CD4-positive, alpha-beta T cell (primary cell): ENCODE measurements at regions of chr1 and their contacts with region 1.

Region 1: GRCh38 chr1:28518000-28518744 is 12.3 kb downstream of the RCC1 start:
- DNase-seq: peak; percentile 80 to 93 (median 86)
- ATAC-seq: peak; percentile 90
- H3K4me3 ChIP-seq: peak overlapping the region; percentile 66
- H3K4me3 Mint-ChIP-seq: peak overlapping the region; percentile 91
- H3K27ac ChIP-seq: peak overlapping the region; percentile 23 to 29
- H3K27ac Mint-ChIP-seq: peak overlapping the region; percentile 83
- H3K4me1 ChIP-seq: peaks cover 24% of the 10 kb centered on the region
- H3K4me1 Mint-ChIP-seq: peaks cover 33% of the 10 kb centered on the region
- H3K27me3 ChIP-seq: no peaks in the 10 kb centered on the region
- H3K27me3 Mint-ChIP-seq: no peaks in the 10 kb centered on the region
- CTCF ChIP-seq: peak; percentile 94

Region 2: GRCh38 chr1:28540651-28541050 is 22.5 kb after region 1 on chr1:
- CTCF ChIA-PET with region 1: no interaction called
- POLR2A ChIA-PET with region 1: no interaction called
- intact Hi-C with region 1: no loop called
- DNase-seq: no peak
- ATAC-seq: no peak
- H3K4me3 ChIP-seq: no peak overlapping the region
- H3K4me3 Mint-ChIP-seq: no peak overlapping the region
- H3K27ac ChIP-seq: no peak overlapping the region
- H3K27ac Mint-ChIP-seq: no peak overlapping the region
- H3K4me1 ChIP-seq: no peaks in the 10 kb centered on the region
- H3K4me1 Mint-ChIP-seq: no peaks in the 10 kb centered on the region
- H3K27me3 ChIP-seq: no peaks in the 10 kb centered on the region
- H3K27me3 Mint-ChIP-seq: no peaks in the 10 kb centered on the region
- CTCF ChIP-seq: no peak

Region 3: DNA sequence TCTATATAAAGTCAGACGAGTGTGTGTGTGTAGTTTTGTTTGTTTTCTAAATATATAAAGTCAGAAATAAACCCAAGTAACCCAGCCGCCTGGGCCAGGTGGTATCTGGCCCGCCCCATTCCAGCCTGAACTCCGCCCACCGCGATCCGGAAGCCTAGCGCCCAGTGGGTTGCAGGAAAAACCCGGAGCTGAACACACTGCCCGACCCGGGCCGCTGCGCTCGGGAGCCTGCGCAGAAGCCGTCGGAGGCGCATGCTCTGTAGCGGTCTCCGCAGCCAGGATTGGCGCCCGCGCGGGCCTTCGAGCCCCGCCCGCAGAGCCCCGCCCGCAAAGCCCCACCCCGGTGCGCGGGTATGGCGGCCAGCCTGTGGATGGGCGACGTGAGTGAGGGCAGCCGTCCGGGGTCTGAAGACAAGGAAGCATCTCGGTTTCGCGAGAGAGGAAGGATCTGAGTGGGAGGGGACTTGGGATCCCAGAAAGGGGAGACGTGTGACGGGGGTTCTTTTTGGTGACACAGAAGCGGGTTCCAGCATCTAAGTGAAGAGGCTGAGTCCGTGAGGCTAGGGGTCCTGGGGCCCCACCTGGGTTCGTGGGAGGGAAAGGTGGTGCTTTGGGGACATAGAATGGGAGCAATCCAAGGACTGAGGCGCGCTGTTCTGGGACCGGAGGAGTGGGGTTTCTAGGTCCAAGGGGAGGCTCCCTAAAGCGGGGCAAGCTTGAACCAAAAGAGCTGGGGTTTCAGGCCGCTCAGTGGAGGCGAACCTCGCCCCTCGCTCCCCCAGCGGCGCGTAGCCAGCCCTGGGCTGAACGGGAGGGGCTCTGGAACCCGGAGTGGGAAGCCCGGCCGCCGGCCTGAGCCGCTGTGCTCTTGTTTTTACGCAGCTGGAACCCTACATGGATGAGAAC is 34.8 kb after region 1 on chr1 and contains the start of gene TRNAU1AP:
- CTCF ChIA-PET with region 1: interaction called, 7 read pairs
- POLR2A ChIA-PET with region 1: interaction called, 9 read pairs
- intact Hi-C with region 1: loop called (anchors 1 to 2 kb)
- DNase-seq: peak; percentile 94 to 99 (median 96)
- ATAC-seq: peak; percentile 95
- H3K4me3 ChIP-seq: peak within 1 kb of the TSS; percentile 84
- H3K4me3 Mint-ChIP-seq: peak within 1 kb of the TSS; percentile 99
- H3K27ac ChIP-seq: peak within 1 kb of the TSS; percentile 66 to 68
- H3K27ac Mint-ChIP-seq: peak within 1 kb of the TSS; percentile 99
- H3K4me1 ChIP-seq: peaks cover 22% of the 10 kb centered on the region
- H3K4me1 Mint-ChIP-seq: peaks cover 31% of the 10 kb centered on the region
- H3K27me3 ChIP-seq: no peaks in the 10 kb centered on the region
- H3K27me3 Mint-ChIP-seq: no peaks in the 10 kb centered on the region
- CTCF ChIP-seq: no peak
- total RNA-seq, gene TRNAU1AP: 21.4 to 24.2 TPM

Region 4: DNA sequence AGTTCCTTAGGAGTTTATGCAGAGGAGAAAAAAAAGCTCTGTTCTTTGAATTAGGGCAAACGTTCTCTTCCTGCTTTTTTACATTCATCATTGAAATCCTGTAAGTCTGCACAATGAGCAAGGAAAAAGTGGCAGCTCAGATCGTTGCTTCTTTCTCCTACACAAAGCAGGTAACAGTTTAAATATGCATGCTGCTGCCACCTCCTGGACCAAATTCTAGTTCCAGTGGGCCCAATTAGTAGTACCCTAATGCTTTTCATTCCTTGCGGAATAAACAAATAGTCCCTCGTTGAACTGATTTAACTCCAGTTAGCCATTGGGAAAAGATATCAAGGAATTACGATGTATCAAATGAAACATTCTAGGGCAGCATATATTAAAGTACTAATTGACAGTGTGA is 238.7 kb after region 1 on chr1:
- CTCF ChIA-PET with region 1: no interaction called
- POLR2A ChIA-PET with region 1: no interaction called
- intact Hi-C with region 1: loop called in 1 of 2 experiments (anchors 1 kb)
- DNase-seq: peak in 4 of 14 experiments; percentile 17 to 45 (median 28)
- ATAC-seq: peak; percentile 56
- H3K4me3 ChIP-seq: no peak overlapping the region
- H3K4me3 Mint-ChIP-seq: no peak overlapping the region
- H3K27ac ChIP-seq: no peak overlapping the region
- H3K27ac Mint-ChIP-seq: no peak overlapping the region
- H3K4me1 ChIP-seq: peaks cover 29% of the 10 kb centered on the region
- H3K4me1 Mint-ChIP-seq: peaks cover 37% of the 10 kb centered on the region
- H3K27me3 ChIP-seq: no peaks in the 10 kb centered on the region
- H3K27me3 Mint-ChIP-seq: no peaks in the 10 kb centered on the region
- CTCF ChIP-seq: peak; percentile 34

Region 5: GRCh38 chr1:28886731-28887418 is 368.7 kb after region 1 on chr1:
- CTCF ChIA-PET with region 1: no interaction called
- POLR2A ChIA-PET with region 1: no interaction called
- intact Hi-C with region 1: no loop called
- DNase-seq: peak; percentile 81 to 95 (median 89)
- ATAC-seq: peak; percentile 73
- H3K4me3 ChIP-seq: peak overlapping the region; percentile 99
- H3K4me3 Mint-ChIP-seq: peak overlapping the region; percentile 95
- H3K27ac ChIP-seq: peak overlapping the region; percentile 57 to 76
- H3K27ac Mint-ChIP-seq: peak overlapping the region; percentile 84
- H3K4me1 ChIP-seq: peaks cover 68% of the 10 kb centered on the region
- H3K4me1 Mint-ChIP-seq: peaks cover 51% of the 10 kb centered on the region
- H3K27me3 ChIP-seq: no peaks in the 10 kb centered on the region
- H3K27me3 Mint-ChIP-seq: peaks cover 5% of the 10 kb centered on the region
- CTCF ChIP-seq: no peak